ENCODE measurements at regions of chr1 and their contacts with region 1.

Region 1: GRCh38 chr1:212769459-212770167 is 22.0 kb downstream of the NSL1 start:
- DNase-seq: no peak
- H3K4me3 ChIP-seq: no peak overlapping the region
- H3K27ac ChIP-seq: no peak overlapping the region
- H3K4me1 ChIP-seq: no peaks in the 10 kb centered on the region
- H3K27me3 ChIP-seq: no peaks in the 10 kb centered on the region
- CTCF ChIP-seq: no peak
- EP300 ChIP-seq: no peak
- RAD21 ChIP-seq: no peak

Region 2: GRCh38 chr1:212782422-212783154 is 13.0 kb after region 1 on chr1:
- CTCF ChIA-PET with region 1: interaction called, 10 read pairs
- POLR2A ChIA-PET with region 1: no interaction called
- DNase-seq: peak; percentile 41
- H3K4me3 ChIP-seq: no peak overlapping the region; a peak in 1 of 4 replicates
- H3K27ac ChIP-seq: no peak overlapping the region
- H3K4me1 ChIP-seq: no peaks in the 10 kb centered on the region
- H3K27me3 ChIP-seq: no peaks in the 10 kb centered on the region
- CTCF ChIP-seq: peak; percentile 74
- EP300 ChIP-seq: no peak
- RAD21 ChIP-seq: peak; percentile 79

Region 3: GRCh38 chr1:212794561-212795014 is 25.0 kb after region 1 on chr1:
- CTCF ChIA-PET with region 1: no interaction called
- POLR2A ChIA-PET with region 1: no interaction called
- DNase-seq: no peak
- H3K4me3 ChIP-seq: no peak overlapping the region
- H3K27ac ChIP-seq: no peak overlapping the region
- H3K4me1 ChIP-seq: peaks cover 2 to 3% of the 10 kb centered on the region in 2 experiments; a peak in 2 of 4 replicates
- H3K27me3 ChIP-seq: no peaks in the 10 kb centered on the region
- CTCF ChIP-seq: no peak
- EP300 ChIP-seq: no peak
- RAD21 ChIP-seq: no peak

Region 4: DNA sequence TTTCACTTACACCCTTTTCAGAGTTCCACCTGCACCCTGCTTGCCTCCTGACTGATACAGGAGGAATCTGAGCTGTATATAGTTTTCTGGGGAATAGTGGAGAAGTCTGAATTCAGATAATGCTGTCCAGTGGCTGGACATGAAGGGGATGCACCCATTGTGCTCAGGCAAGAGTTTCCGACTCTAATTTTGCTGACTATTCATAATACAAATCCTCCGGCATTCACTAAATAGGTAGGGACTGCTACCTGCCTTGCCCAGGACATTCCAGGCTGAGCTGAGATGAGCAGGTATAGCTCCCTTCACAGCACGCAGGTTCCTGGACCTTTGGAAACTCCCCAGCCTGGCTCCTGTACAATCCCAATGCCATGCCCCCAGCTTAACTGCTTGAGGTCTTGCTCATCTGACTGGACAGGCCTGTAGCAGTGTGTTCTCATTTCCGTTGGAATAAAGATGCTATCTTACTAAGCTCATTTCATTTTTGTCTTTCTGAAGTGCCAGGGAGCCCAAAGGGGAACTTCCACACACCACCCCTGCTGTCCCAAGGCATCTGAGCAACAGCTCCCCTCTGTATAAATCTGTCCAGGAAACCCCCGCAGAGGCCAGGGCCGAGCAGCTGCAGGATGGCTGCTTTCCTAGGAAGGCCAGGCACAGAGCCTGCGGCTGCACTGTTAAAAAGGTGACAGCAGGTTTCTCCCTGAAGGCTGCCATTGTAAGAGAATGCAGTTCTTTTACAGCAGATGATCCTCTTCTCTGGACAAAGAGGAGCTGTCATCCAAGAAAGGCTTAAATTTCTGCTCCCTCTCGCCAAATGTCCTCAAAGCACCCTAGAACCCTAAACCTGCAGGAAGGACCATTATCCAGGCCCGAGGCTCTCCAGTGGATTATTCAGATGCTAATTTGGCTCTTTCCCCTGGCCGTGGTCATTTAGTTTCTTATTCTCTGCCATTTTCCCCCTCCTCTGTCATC is 159.0 kb after region 1 on chr1:
- CTCF ChIA-PET with region 1: no interaction called
- POLR2A ChIA-PET with region 1: no interaction called
- DNase-seq: peak; percentile 49
- H3K4me3 ChIP-seq: no peak overlapping the region
- H3K27ac ChIP-seq: peak overlapping the region in 1 of 2 experiments; percentile 39; a peak in 2 of 4 replicates
- H3K4me1 ChIP-seq: peaks cover 7 to 13% of the 10 kb centered on the region in 2 experiments; a peak in 3 of 4 replicates
- H3K27me3 ChIP-seq: no peaks in the 10 kb centered on the region
- CTCF ChIP-seq: no peak
- EP300 ChIP-seq: no peak
- RAD21 ChIP-seq: no peak

Measured in SK-N-SH (cell line).